ENCODE measurements at regions of chr1 and their contacts with region 1.

Region 1: GRCh38 chr1:110495926-110496600 is 22.9 kb downstream of the KCNA10 start:
- DNase-seq: peak; percentile 65
- H3K4me3 Mint-ChIP-seq: no peak overlapping the region
- H3K27ac Mint-ChIP-seq: no peak overlapping the region
- H3K4me1 Mint-ChIP-seq: no peaks in the 10 kb centered on the region
- H3K27me3 Mint-ChIP-seq: peaks cover 3% of the 10 kb centered on the region

Region 2: GRCh38 chr1:110196917-110197765 is 298.9 kb before region 1 on chr1:
- intact Hi-C with region 1: loop called (anchors 1 kb)
- DNase-seq: peak; percentile 40
- H3K4me3 Mint-ChIP-seq: no peak overlapping the region
- H3K27ac Mint-ChIP-seq: no peak overlapping the region
- H3K4me1 Mint-ChIP-seq: no peaks in the 10 kb centered on the region
- H3K27me3 Mint-ChIP-seq: peaks cover 2% of the 10 kb centered on the region

Region 3: GRCh38 chr1:110412576-110412975 is 83.5 kb before region 1 on chr1:
- intact Hi-C with region 1: loop called (anchors 1 kb)
- DNase-seq: peak; percentile 46
- H3K4me3 Mint-ChIP-seq: no peak overlapping the region
- H3K27ac Mint-ChIP-seq: no peak overlapping the region
- H3K4me1 Mint-ChIP-seq: peaks cover 13% of the 10 kb centered on the region
- H3K27me3 Mint-ChIP-seq: peaks cover 5% of the 10 kb centered on the region